PC-9 (cell line): ENCODE measurements at regions of chr6 and their contacts with region 1.

Region 1: DNA sequence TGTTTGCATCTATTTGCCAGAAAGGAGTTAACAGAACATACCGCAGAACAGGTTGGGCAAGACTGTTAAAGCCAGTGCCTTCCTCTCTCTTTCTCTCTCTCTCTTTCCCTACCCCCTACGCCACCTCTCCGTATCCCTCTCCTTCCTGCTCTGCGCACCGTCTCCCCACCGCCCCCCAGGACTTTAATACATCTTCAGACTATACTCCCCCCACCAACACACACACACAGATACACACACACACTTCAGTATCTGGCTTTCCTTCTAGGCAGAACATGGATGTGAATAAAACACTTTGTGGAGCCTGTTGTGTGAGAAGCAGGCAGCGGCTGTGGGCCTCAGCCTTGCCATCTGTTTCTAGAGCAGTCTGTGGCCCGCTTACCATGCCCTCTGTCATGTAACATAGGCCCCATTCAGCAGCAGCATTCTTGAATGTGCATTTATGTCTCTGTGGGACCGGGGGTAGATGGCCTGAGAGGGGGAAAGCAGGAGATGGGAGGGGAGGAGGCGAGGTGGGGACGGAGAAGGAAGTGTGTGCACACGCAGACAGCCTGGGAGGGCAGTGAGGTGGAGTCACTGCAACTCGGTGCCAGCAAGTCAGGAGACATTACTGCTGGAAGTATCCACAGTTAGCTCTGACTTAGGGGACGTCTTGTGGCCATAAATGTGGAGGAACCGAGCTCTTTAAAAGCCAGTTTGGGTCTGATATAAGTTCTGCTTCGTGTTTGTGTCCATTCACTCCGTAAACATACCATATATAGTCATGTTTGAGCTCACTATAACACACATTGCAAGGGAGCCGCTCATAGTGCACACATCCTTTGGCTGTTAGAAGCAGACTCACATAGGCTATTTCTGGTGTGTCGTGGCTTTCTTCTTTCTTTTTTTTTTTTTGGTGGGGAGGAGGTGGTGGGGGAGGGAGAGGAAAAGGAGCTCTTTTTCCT is 38.4 kb downstream of the RREB1 start:
- DNase-seq: peak; percentile 60 to 72
- H3K4me3 ChIP-seq: peak overlapping the region; percentile 66
- H3K27ac ChIP-seq: peak overlapping the region; percentile 91
- H3K4me1 ChIP-seq: peaks cover 72% of the 10 kb centered on the region
- H3K27me3 ChIP-seq: no peaks in the 10 kb centered on the region
- CTCF ChIP-seq: no peak

Region 2: DNA sequence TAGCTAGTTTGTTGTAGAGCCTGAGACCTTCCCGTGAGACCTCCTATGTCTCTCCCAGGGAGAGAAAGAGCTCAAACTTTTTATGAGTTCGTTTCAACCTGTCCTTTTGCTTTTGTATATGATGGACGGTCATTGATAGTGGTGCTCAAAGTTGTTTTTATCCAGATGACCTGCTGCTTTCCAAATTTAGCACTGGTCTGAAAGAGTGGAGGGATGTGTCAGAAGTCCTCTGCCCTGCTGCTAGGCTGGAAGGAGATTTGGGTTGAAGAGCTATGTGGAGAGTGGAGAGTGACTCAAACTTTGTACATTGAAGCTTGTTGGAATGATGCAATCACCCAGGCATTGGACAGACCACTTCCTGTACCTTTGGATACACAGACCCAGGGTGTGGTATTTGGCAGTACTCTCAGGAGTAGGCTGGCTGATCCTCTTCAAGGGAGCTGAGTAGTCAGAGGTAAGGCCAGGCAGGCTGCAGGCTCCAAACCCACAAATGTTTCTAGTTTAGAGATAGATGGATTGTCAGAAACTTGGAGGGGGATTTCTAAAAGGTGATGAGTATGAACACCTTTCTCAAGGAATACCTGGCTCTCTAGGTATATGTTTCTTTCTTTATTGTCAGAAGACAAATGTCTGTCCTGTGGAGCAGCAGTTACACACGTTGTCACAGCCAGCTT is 87.8 kb before region 1 on chr6:
- CTCF ChIA-PET with region 1: no interaction called
- POLR2A ChIA-PET with region 1: no interaction called
- intact Hi-C with region 1: loop called (anchors 2 kb)
- DNase-seq: peak; percentile 82 to 95
- H3K4me3 ChIP-seq: no peak overlapping the region
- H3K27ac ChIP-seq: peak overlapping the region; percentile 87
- H3K4me1 ChIP-seq: peaks cover 48% of the 10 kb centered on the region
- H3K27me3 ChIP-seq: no peaks in the 10 kb centered on the region
- CTCF ChIP-seq: no peak

Region 3: DNA sequence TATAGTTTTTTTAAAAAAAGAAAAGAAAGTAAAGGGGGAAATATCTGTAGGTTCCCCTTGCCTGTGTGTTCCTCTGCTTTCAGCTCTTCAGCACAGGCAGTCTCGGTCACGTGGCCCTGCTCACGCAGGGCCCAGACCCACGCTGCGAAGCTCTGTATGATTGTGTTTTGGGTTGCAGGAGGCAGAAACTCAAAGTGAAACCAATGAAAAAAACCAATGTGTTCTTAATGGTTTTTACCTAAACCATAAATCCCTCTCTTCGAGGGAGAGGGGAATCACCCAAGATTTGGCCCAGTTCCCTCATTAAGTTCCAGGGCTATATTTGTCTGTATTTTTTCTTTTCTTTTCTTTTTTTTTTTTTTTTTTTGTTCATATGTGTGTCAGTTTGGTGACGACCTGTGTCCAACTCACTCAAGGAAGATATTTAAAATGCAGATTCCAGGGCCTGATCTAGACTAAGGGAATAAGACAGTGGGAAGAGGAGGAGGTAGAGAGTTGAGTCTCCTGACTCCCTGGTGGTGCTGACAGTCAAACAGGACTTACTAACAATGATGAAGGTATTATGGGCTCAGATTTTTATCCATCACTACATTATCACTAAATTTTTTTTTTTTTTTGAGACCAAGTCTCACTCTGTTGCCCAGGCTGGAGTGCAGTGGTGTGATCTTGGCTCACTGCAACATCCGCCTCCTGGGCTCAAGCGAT is 72.2 kb before region 1 on chr6:
- CTCF ChIA-PET with region 1: no interaction called
- POLR2A ChIA-PET with region 1: no interaction called
- intact Hi-C with region 1: no loop called
- DNase-seq: no peak
- H3K4me3 ChIP-seq: no peak overlapping the region
- H3K27ac ChIP-seq: no peak overlapping the region
- H3K4me1 ChIP-seq: no peaks in the 10 kb centered on the region
- H3K27me3 ChIP-seq: no peaks in the 10 kb centered on the region
- CTCF ChIP-seq: no peak

Region 4: DNA sequence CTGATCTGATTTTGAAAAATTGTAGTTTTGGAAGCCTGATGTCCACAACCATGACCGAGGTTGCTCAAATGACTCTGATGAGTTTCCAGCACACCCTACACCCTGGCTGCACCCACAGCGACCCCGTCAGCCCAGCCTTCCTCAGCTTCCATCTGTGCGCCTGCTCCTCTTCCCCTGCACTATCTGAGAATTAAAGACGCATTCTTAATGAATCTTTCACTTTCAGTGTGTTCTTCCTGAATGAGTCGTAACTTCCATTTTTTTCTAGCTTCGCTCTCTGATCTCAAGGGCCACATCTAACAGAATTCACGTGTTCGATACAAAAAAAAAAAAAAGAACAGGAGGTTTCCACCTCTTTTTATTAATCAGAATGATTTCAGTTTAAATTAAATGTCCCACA is 59.7 kb before region 1 on chr6:
- CTCF ChIA-PET with region 1: no interaction called
- POLR2A ChIA-PET with region 1: no interaction called
- intact Hi-C with region 1: no loop called
- DNase-seq: peak in 1 of 2 experiments; percentile 5
- H3K4me3 ChIP-seq: no peak overlapping the region
- H3K27ac ChIP-seq: no peak overlapping the region
- H3K4me1 ChIP-seq: no peaks in the 10 kb centered on the region
- H3K27me3 ChIP-seq: no peaks in the 10 kb centered on the region
- CTCF ChIP-seq: no peak

Region 5: GRCh38 chr6:7201688-7202541 is 55.8 kb after region 1 on chr6:
- CTCF ChIA-PET with region 1: no interaction called
- POLR2A ChIA-PET with region 1: interaction called, 3 read pairs
- intact Hi-C with region 1: loop called (anchors 1 kb)
- DNase-seq: no peak
- H3K4me3 ChIP-seq: no peak overlapping the region; the same call in 1 of the 2 replicates
- H3K27ac ChIP-seq: peak overlapping the region; percentile 92
- H3K4me1 ChIP-seq: peaks cover 36% of the 10 kb centered on the region
- H3K27me3 ChIP-seq: no peaks in the 10 kb centered on the region
- CTCF ChIP-seq: no peak

Region 6: DNA sequence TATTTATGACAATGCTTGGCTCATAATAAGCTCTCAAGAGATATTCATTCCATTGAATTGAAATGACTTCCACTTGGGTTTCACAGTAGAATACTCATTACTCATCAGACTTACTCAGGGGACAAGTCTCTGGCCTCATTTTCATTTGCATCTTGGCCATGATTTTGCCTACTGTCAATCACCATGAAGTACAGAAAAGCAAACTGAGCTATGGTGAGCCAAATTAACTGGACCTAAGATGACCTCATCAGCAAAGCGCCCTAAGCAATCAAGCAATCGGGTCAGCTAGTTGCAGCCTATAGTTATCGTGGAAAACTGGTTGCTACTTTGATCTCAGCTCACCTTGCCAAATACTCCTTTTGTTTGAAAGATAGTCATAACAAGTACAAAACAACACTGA is 1783.9 kb after region 1 on chr6:
- CTCF ChIA-PET with region 1: no interaction called
- POLR2A ChIA-PET with region 1: no interaction called
- intact Hi-C with region 1: no loop called
- DNase-seq: no peak
- H3K4me3 ChIP-seq: no peak overlapping the region
- H3K27ac ChIP-seq: no peak overlapping the region
- H3K4me1 ChIP-seq: no peaks in the 10 kb centered on the region
- H3K27me3 ChIP-seq: no peaks in the 10 kb centered on the region
- CTCF ChIP-seq: no peak